AG04449 (cell line): ENCODE measurements at regions of chr1 and their contacts with region 1.

Region 1: DNA sequence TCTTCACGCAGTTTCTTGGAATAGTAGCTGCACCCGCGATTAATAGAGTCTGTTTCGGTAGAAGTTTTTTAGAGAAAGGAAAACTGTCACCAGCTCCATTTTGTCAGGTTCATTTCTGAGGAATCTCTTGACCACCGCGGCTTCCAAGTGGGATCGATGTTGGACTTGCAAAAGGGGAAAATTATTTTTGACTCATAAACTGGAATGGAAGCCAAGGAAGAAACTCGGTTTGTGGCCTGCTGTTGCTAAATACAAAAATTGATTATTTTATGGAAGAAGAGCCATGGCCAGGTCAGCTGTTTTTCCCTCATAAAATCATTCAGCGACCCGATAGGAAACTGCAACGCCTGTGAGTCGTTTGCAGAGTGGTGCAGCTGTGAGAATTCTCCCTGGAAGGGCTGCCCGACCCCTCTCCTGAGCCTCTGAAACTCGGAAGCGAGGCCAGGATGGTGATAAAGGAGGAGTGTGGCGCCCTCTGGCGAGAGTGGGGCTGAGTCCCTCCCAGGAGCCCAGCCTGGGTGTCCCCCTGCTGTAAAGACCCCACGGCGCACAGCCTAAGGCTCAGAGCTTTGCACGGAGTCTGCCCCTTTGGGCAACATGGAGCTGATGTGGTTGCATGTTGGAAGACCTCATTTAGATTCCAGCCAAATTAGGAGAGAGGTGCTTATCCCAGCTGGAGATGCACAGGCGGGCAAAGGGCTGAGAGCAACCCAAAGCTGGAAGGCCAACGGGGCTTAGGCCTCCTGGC is 83.6 kb upstream of the SLC25A33 start:
- DNase-seq: no peak
- H3K4me3 ChIP-seq: no peak overlapping the region
- CTCF ChIP-seq: peak; percentile 87

Region 2: DNA sequence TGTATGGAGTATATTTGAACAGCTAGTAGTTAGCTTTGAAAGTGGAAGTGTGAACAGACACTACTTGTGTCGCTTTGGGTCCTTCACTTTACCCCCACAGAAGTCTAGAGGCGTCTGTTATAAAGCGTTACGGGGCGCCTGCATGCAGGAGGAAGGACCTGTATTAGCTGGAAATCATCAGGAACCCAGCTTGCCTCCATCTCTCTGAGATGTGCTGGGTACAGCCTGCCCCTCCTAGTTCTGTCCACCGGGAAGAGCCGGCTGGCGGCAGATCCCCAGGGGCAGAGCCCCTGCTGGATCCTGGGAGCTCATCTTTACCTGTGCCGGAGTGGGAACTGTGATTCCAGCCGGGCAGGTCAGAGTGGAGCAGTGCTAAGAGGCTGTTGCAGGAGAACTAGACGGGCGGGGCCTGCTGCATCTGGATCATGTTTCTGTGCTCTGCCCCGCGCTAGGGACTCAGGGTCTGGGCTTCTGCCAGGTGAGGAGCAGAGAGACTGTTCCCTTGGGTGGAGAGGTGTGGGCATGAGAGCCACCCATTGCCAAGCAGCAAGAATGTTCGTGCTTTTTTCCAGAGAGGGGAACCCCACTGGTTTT is 185.3 kb before region 1 on chr1:
- CTCF ChIA-PET with region 1: interaction called, 184 read pairs
- POLR2A ChIA-PET with region 1: no interaction called
- DNase-seq: no peak
- H3K4me3 ChIP-seq: no peak overlapping the region
- CTCF ChIP-seq: no peak

Region 3: DNA sequence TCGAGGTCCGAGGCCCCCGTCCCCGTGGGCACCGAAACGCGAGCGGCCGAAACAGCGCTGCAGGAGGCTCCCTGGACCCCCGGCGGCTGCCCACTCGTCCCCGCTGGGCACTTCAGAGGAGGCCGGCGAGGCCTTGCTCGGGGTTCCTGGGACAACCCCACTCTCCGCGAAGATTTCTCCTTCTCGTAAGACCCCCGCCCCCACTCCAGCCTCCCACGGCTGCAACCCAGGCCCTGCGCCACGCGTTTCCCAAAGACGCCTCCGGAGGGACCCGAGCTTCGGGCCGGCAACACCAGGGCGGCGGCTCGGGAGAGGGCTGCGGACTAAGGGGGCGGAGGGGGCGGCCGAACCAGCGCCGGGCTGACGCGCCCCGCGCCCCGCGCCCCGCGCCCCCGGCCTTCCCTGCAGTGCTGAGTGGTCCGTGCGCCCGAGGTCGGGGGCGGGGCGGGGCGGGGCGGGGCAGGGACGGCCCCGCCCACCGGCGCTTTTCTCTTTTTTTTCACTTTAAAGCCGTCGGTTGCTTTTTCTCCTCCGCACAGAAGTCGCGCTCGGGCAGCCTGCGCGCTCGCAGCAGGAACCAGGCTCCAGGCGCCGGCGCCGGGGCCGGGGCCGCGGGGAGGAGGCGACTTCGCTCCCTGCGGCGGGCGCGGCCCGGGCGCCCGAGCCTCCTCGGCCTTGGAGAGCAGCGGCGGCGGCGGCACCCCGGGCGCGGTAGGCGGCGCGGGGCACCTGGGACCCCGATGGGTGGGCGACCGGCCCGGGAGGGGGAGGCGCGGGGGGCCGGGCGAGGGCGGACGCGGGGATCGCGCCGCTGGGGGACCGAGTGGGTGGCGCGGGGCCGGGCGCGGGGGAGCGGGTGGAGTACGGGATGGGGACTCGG is 163.1 kb before region 1 on chr1 and contains the start of gene SPSB1:
- CTCF ChIA-PET with region 1: interaction called, 205 read pairs
- POLR2A ChIA-PET with region 1: no interaction called
- DNase-seq: no peak
- H3K4me3 ChIP-seq: peak within 1 kb of the TSS; percentile 83
- CTCF ChIP-seq: no peak

Region 4: DNA sequence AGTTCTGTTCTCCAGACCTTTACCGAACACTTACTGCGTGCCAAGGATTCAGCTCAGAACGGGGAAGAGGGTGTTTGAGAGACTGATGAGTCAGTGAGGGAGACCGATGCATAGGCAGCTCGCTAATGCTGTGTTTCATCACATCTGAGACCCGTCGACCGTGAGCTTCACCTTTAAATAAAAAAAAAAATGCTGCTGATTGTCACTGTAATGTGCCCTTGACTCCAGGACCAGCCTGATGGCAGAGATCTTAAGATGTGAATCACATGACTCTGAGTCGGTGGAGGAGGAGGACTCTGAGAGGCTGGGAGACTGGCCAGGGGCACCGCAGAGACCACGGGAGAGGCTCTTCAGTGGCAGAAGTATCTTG is 134.2 kb before region 1 on chr1:
- CTCF ChIA-PET with region 1: interaction called, 17 read pairs
- POLR2A ChIA-PET with region 1: no interaction called
- DNase-seq: no peak
- H3K4me3 ChIP-seq: no peak overlapping the region
- CTCF ChIP-seq: no peak

Region 5: GRCh38 chr1:9363061-9363471 is 92.6 kb before region 1 on chr1:
- CTCF ChIA-PET with region 1: no interaction called
- POLR2A ChIA-PET with region 1: no interaction called
- DNase-seq: no peak
- H3K4me3 ChIP-seq: no peak overlapping the region
- CTCF ChIP-seq: no peak

Region 6: GRCh38 chr1:9466780-9467758 is 11.4 kb after region 1 on chr1:
- CTCF ChIA-PET with region 1: interaction called, 24 read pairs
- POLR2A ChIA-PET with region 1: no interaction called
- DNase-seq: no peak
- H3K4me3 ChIP-seq: no peak overlapping the region; the same call in 1 of the 2 replicates
- CTCF ChIP-seq: no peak